ENCODE measurements at regions of chr2 and their contacts with region 1.

Region 1: DNA sequence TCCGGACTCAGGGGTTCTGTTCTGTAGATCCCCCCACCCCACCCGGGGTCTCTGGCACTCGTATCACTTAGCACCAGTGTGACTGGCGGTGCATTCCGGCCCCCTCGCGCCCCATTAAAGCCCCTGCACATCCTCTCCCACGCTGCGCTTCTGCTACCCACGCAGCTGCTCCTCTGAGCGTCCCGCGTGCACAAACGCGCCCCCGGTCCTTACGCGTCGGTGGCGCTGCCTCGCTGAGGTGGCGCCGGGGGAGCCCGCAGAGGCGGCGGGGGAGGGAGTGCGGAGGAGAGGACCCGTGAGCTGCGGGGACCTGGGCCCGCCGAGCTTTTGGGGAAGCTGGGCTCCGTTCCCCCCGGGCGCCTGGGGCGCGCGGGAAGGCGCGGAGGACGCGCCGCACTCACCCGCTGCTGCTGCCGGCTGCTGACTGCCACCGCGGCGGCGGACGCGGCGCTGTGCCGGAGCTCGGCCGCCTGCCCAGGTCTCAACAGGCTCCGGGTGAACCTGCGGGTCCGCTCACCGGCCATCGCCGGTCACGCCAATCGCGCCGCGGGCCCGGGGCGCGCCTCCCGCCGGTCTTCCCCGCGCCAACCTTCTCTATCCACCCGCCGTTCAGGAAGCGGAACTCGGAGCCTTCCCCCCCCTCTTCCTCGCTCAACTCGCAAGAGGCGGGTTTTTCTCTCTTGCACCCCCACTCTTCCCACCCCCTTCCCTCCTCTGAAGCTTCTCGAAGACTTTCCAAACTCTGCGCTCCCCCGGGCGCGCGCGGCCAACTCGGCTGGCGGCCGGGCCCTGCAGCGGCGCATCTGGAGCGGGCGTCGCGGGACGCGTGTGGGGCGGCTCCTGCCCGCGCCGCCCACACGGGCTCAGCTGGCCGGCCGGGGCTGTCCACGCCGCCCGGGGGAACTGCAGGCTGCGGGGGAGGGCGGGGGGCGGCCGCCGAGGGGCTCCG is at the start of gene DOCK10:
- DNase-seq: no peak
- ATAC-seq: peak; percentile 36
- H3K4me3 ChIP-seq: peak within 1 kb of the TSS; percentile 92
- H3K27ac ChIP-seq: peak within 1 kb of the TSS; percentile 98
- H3K4me1 ChIP-seq: peaks cover 13% of the 10 kb centered on the region
- H3K27me3 ChIP-seq: no peaks in the 10 kb centered on the region
- CTCF ChIP-seq: no peak
- EP300 ChIP-seq: no peak
- POLR2A ChIP-seq: peak; percentile 65
- RAD21 ChIP-seq: no peak
- polyA plus RNA-seq, gene DOCK10: 16.9 to 17.8 TPM

Region 2: DNA sequence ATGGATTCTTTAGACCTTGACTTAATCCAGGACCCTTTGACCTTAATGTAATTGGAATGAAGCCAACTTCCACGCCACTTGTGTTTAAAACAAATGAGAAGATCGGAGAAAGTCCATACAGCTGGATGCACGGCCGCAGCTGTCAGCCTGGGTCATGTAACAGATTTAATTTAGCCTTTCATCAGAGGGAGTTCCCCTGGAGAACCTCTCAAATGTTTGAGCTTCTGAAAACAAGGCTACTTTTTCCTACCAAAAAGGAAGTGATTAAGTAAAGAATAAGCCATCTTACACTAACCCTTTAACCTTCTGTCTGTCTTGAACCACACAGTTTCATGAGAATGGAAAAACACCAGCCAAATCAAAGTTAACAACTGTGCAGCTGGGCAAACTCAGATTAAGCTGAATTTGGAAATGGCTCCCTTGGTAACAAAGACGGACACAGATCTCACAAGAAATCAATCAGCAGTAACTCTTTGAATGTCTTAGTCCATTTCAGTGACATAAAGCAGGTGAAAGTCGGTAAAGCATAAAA is 103.4 kb before region 1 on chr2:
- CTCF ChIA-PET with region 1: interaction called, 4 read pairs
- POLR2A ChIA-PET with region 1: interaction called, 8 read pairs
- RAD21 ChIA-PET with region 1: interaction called, 15 read pairs
- SMC1A ChIA-PET with region 1: interaction called, 30 read pairs
- in situ Hi-C with region 1: no loop called
- intact Hi-C with region 1: loop called (anchors 2 kb)
- DNase-seq: no peak
- ATAC-seq: peak; percentile 64
- H3K4me3 ChIP-seq: peak overlapping the region; percentile 62
- H3K27ac ChIP-seq: peak overlapping the region; percentile 88
- H3K4me1 ChIP-seq: peaks cover 31% of the 10 kb centered on the region
- H3K27me3 ChIP-seq: no peaks in the 10 kb centered on the region
- CTCF ChIP-seq: no peak
- EP300 ChIP-seq: peak; percentile 37 to 52; a peak in 2 of 4 replicates
- POLR2A ChIP-seq: no peak
- RAD21 ChIP-seq: no peak

Region 3: DNA sequence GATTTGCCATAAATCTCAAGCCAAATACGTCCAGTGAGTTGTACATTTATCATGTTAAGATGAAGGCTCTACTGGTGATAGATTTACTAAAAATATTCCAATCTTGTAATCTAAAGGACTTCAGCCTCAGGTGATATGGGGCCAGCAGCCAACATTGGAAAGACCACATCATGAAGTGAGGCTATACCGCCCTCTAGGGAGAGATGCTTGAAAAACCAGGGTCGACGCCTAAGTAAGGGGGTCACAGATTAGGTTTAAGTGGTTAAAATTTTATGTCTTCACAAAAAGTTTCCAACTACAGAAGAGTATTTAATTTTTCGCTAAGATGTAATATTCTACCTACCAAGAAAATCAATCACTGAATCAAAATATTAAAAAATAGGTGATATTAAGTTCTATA is 33.2 kb before region 1 on chr2:
- CTCF ChIA-PET with region 1: interaction called, 7 read pairs
- POLR2A ChIA-PET with region 1: interaction called, 8 read pairs
- RAD21 ChIA-PET with region 1: interaction called, 47 read pairs
- SMC1A ChIA-PET with region 1: interaction called, 53 read pairs
- in situ Hi-C with region 1: no loop called
- intact Hi-C with region 1: loop called (anchors 1 kb)
- DNase-seq: no peak
- ATAC-seq: peak; percentile 70
- H3K4me3 ChIP-seq: no peak overlapping the region
- H3K27ac ChIP-seq: peak overlapping the region; percentile 65
- H3K4me1 ChIP-seq: peaks cover 24% of the 10 kb centered on the region
- H3K27me3 ChIP-seq: no peaks in the 10 kb centered on the region
- CTCF ChIP-seq: peak; percentile 46 to 61 (median 61)
- EP300 ChIP-seq: no peak
- POLR2A ChIP-seq: no peak
- RAD21 ChIP-seq: peak; percentile 69

Region 4: DNA sequence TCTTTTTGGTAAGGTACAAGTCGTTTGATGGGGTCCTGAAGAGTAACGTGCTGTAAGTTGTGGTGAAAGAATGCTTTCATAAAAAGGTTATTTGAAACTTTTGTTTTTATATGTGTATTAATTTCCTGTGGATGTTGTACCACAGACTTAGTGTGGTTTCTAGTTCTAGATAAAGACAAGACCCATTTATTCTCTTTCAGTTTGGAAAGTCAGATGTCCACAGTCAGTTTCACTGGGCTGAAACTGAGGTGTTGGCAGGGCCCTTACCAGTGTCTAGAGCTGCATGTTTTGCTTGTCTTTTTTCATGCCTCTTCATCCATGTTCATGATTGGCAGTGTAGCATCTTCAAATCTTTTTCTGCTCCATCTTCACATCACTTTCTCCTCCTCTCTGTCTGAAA is 22.2 kb after region 1 on chr2:
- CTCF ChIA-PET with region 1: no interaction called
- POLR2A ChIA-PET with region 1: no interaction called
- RAD21 ChIA-PET with region 1: no interaction called
- SMC1A ChIA-PET with region 1: no interaction called
- in situ Hi-C with region 1: no loop called
- intact Hi-C with region 1: no loop called
- DNase-seq: no peak
- ATAC-seq: peak; percentile 34; the same call in 2 of the 3 replicates
- H3K4me3 ChIP-seq: no peak overlapping the region
- H3K27ac ChIP-seq: no peak overlapping the region
- H3K4me1 ChIP-seq: no peaks in the 10 kb centered on the region
- H3K27me3 ChIP-seq: no peaks in the 10 kb centered on the region
- CTCF ChIP-seq: no peak
- EP300 ChIP-seq: no peak
- POLR2A ChIP-seq: no peak
- RAD21 ChIP-seq: no peak

Region 5: DNA sequence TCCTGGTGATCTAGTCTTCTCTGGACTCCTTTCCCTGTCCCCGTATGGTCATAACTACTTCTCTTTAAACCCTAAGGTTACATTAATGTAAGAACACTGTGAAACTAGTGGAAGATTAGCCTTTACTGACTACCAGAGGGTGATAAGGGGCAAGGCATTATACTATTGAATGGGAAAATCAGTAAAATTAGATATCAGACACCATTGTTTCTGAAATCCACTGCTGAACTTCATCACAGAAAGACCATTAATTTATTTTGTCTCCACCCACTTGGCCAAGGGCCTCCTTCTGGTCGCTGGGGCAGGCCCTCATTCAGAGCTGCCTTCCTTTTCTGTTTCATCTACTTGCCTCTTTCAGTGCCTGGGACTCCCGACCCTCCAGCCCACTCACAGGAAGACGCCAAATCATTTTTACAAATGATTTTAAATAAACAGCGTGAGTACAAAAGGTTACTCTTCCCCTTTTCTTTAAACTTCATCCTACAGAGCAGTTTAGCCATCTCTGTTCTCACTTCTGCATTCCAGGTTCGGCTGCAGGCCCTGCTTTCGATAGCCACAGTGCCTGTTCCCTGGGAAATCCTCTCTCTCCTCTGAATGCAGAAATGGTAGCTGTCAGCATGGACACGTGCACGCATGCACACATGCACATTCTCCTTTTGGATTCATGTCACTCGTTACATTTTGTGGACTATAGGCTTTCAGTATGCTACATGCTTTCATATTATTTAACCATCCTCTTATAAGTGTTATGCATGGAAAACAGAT is 70.4 kb after region 1 on chr2:
- CTCF ChIA-PET with region 1: no interaction called
- POLR2A ChIA-PET with region 1: no interaction called
- RAD21 ChIA-PET with region 1: interaction called, 5 read pairs
- SMC1A ChIA-PET with region 1: interaction called, 3 read pairs
- in situ Hi-C with region 1: no loop called
- intact Hi-C with region 1: loop called (anchors 5 kb)
- DNase-seq: peak; percentile 13
- ATAC-seq: peak; percentile 86
- H3K4me3 ChIP-seq: no peak overlapping the region
- H3K27ac ChIP-seq: no peak overlapping the region
- H3K4me1 ChIP-seq: peaks cover 9% of the 10 kb centered on the region
- H3K27me3 ChIP-seq: no peaks in the 10 kb centered on the region
- CTCF ChIP-seq: no peak
- EP300 ChIP-seq: 0 out of 4 replicates have a peak, but pooled peaks of 1 of the 2 experiments have one; percentile 22
- POLR2A ChIP-seq: no peak
- RAD21 ChIP-seq: no peak

Region 6: GRCh38 chr2:226835796-226836547 is 1793.8 kb after region 1 on chr2 and contains the start of gene RHBDD1:
- CTCF ChIA-PET with region 1: no interaction called
- POLR2A ChIA-PET with region 1: no interaction called
- RAD21 ChIA-PET with region 1: no interaction called
- SMC1A ChIA-PET with region 1: no interaction called
- in situ Hi-C with region 1: no loop called
- intact Hi-C with region 1: loop called (anchors 5 kb)
- DNase-seq: peak; percentile 86
- ATAC-seq: peak; percentile 88
- H3K4me3 ChIP-seq: peak within 1 kb of the TSS; percentile 79
- H3K27ac ChIP-seq: peak within 1 kb of the TSS; percentile 97
- H3K4me1 ChIP-seq: peaks cover 6% of the 10 kb centered on the region; the same call in 1 of the 2 replicates
- H3K27me3 ChIP-seq: no peaks in the 10 kb centered on the region
- CTCF ChIP-seq: no peak
- EP300 ChIP-seq: peak; percentile 36 to 49
- POLR2A ChIP-seq: peak; percentile 98
- RAD21 ChIP-seq: 0 out of 2 replicates have a peak, but pooled peaks have one; percentile 7
- polyA plus RNA-seq, gene RHBDD1: 7.1 to 7.3 TPM

Measured in GM12878 (cell line).